ENCODE measurements at regions of chr14 and their contacts with region 1.

Region 1: GRCh38 chr14:58258156-58258555 is 13.5 kb downstream of the PSMA3 start:
- DNase-seq: no peak
- ATAC-seq: no peak
- H3K4me3 Mint-ChIP-seq: no peak overlapping the region
- H3K27ac Mint-ChIP-seq: no peak overlapping the region
- H3K4me1 Mint-ChIP-seq: peaks cover 7% of the 10 kb centered on the region
- H3K27me3 Mint-ChIP-seq: no peaks in the 10 kb centered on the region

Region 2: DNA sequence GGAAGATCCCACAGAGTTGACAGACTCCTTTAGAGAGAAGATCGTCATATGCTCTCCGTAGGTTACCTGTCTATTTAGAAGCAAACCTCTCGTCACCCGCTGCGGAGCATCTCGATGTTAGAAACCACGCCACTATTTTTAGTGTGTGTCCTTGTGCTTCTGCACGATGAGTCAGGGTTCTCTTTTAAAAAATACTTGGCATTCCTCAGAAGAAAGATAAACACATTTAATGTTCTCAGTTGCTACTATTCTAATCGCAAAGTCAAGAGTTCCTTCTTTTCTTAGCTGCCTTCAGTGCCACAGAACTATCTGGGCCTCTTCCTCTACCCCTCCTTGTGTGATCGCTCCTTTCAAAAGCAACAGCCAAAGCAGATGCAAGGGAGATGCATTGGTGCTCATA is 1947.5 kb before region 1 on chr14:
- CTCF ChIA-PET with region 1: no interaction called
- POLR2A ChIA-PET with region 1: no interaction called
- intact Hi-C with region 1: no loop called
- DNase-seq: no peak
- ATAC-seq: no peak
- H3K4me3 Mint-ChIP-seq: no peak overlapping the region
- H3K27ac Mint-ChIP-seq: no peak overlapping the region
- H3K4me1 Mint-ChIP-seq: no peaks in the 10 kb centered on the region
- H3K27me3 Mint-ChIP-seq: peaks cover 2% of the 10 kb centered on the region

Region 3: DNA sequence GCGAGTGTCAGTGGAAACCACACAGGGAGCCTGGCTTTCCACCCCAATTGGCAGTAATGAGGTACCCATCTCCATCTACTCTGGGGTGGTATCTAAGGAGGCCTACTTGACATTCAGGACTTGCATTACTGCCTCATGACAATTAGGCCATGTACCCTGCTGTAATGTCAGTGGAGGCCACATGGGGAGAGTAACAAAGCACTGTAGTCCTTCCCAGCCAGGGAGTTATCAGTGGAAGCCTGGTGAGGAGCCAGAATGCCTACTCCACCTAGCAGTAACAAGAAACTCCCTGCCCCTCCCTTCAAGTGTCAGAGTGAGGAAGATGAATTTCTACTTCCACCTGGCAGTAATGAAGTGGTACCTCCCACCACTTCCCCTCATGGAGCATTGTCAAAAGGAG is 156.7 kb after region 1 on chr14:
- CTCF ChIA-PET with region 1: interaction called, 3 read pairs
- POLR2A ChIA-PET with region 1: no interaction called
- intact Hi-C with region 1: loop called in 1 of 2 experiments (anchors 5 kb)
- DNase-seq: no peak
- ATAC-seq: peak; percentile 55
- H3K4me3 Mint-ChIP-seq: no peak overlapping the region
- H3K27ac Mint-ChIP-seq: no peak overlapping the region
- H3K4me1 Mint-ChIP-seq: peaks cover 18% of the 10 kb centered on the region
- H3K27me3 Mint-ChIP-seq: no peaks in the 10 kb centered on the region

Measured in activated CD4-positive, alpha-beta T cell treated with anti-CD3 and anti-CD28 coated beads for 36 hours (primary cell).